Activated naive CD4-positive, alpha-beta T cell treated with anti-CD3 and anti-CD28 coated beads for 36 hours (primary cell): ENCODE measurements at regions of chr2 and their contacts with region 1.

Region 1: DNA sequence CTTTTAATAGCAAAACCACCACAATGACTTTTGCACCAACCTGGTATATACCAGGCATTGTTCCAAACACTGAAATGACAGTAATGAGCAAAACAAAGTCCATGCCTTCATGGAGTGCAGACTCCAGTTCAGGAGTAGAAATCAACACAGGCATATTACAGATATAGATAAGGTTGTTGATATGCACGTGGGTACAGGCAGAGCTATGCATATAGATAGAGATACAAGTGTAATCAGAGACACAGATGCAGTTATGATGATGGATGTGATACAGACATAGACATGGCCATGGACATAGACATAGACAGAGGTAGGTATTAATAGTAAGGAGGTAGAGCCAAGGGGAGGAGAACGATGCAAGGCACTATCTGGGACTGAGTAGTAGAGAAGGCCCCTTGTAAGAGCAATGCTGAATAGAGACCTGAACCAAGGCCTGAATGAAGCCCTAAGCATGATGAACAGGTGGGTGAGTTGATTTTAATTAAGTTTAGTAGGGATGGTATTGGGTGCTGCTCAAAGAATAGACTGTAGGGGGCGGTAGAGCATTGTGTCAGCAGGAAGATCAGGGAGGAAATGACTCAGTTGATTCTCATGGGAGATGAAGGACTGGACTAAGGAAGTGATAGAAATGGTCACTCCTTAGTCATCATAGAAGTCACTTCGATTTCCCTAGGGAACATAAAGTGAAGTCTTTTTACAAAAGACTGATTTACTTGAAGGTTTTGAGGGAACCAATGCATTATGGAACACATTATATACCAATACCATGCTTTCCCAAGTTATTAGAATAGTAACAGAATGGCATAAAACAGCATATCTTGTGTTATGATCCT is 39.4 kb downstream of the CMPK2 start:
- DNase-seq: peak; percentile 81
- H3K4me3 Mint-ChIP-seq: no peak overlapping the region
- H3K27ac Mint-ChIP-seq: no peak overlapping the region
- H3K4me1 Mint-ChIP-seq: peaks cover 2% of the 10 kb centered on the region
- H3K27me3 Mint-ChIP-seq: no peaks in the 10 kb centered on the region

Region 2: GRCh38 chr2:6865346-6866274 is 39.3 kb after region 1 on chr2 and contains the start of gene CMPK2:
- CTCF ChIA-PET with region 1: interaction called, 17 read pairs
- intact Hi-C with region 1: loop called (anchors 1 kb)
- DNase-seq: peak; percentile 82
- H3K4me3 Mint-ChIP-seq: peak within 1 kb of the TSS; percentile 89
- H3K27ac Mint-ChIP-seq: peak within 1 kb of the TSS; percentile 77
- H3K4me1 Mint-ChIP-seq: peaks cover 17% of the 10 kb centered on the region
- H3K27me3 Mint-ChIP-seq: no peaks in the 10 kb centered on the region
- total RNA-seq, gene CMPK2: 7.2 to 7.7 TPM

Region 3: GRCh38 chr2:6877402-6878304 is 51.4 kb after region 1 on chr2 and contains the start of gene RSAD2:
- CTCF ChIA-PET with region 1: interaction called, 4 read pairs
- intact Hi-C with region 1: loop called (anchors 1 kb)
- DNase-seq: peak; percentile 45
- H3K4me3 Mint-ChIP-seq: peak within 1 kb of the TSS; percentile 68
- H3K27ac Mint-ChIP-seq: no peak within 1 kb of the TSS
- H3K4me1 Mint-ChIP-seq: peaks cover 66% of the 10 kb centered on the region
- H3K27me3 Mint-ChIP-seq: no peaks in the 10 kb centered on the region
- total RNA-seq, gene RSAD2: 9.1 to 9.9 TPM

Region 4: DNA sequence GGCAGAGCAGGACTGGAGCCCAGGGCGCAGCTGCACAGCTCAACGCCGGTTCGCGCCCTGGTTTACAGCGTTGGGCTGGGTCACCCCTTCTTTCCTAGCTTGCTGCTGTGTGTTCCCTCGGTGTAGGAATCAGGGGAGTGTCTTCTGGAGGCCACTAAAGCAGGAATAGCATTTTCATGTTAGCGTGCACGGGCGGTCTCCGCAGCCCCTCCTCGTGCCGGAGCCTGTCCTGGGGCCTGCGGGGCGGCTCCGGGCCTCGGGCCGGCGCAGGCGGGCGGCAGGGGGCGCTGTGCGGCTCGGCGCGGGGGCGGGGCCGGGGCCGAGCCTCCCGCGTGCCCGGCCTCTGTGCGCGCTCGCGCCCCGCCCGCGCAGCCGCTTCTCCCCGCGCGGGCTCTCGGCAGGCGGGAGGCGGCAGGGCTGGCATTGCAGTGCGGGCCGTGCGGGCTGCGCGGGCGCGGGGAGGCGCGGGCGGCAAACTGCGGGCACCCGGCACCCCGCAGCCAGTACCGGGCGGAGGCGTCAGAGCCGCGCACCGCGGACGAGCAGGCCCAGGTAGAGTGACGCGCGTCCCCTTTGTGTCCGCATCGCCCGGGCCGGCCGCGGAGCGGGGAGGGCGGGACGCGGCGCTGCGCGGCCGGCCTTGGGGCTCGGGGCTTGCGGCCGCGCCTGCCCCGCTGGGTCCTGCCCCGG is 90.9 kb after region 1 on chr2 and contains the start of gene RNF144A:
- CTCF ChIA-PET with region 1: interaction called, 6 read pairs
- intact Hi-C with region 1: loop called (anchors 2 kb)
- DNase-seq: peak; percentile 67
- H3K4me3 Mint-ChIP-seq: peak within 1 kb of the TSS; percentile 76
- H3K27ac Mint-ChIP-seq: peak within 1 kb of the TSS; percentile 85
- H3K4me1 Mint-ChIP-seq: peaks cover 75% of the 10 kb centered on the region
- H3K27me3 Mint-ChIP-seq: no peaks in the 10 kb centered on the region
- total RNA-seq, gene RNF144A: 49.0 to 50.6 TPM

Region 5: GRCh38 chr2:7083577-7084509 is 257.5 kb after region 1 on chr2:
- CTCF ChIA-PET with region 1: interaction called, 3 read pairs
- intact Hi-C with region 1: loop called (anchors 2 kb)
- DNase-seq: peak; percentile 19
- H3K4me3 Mint-ChIP-seq: no peak overlapping the region
- H3K27ac Mint-ChIP-seq: no peak overlapping the region
- H3K4me1 Mint-ChIP-seq: no peaks in the 10 kb centered on the region
- H3K27me3 Mint-ChIP-seq: no peaks in the 10 kb centered on the region

Region 6: DNA sequence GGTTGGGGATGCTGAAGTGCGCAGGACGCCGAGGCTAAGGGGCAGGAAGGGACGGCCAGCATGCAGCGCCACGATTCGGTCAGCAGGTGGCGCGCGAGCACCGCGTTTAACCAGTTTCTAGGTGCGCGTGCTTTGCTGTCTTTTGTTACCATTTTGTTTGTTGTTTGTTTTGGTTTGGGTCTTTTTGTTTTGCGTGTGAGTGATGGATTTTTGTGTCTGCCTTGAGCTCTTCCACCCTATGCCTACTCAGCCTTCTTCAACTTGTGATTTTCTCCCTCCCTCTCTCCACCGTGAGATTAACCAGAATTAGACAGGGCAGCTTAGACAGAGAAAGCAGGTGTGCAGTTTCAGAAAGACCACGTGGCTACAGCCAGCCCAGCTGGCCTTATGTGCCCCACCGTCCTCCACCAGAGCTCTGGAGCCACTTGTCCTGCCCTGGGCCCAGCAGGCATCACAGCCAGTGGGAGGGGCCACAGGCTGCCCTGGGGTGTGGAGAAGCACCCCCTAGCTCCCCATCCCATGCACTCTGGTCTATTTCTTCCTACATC is 271.1 kb after region 1 on chr2:
- CTCF ChIA-PET with region 1: no interaction called
- intact Hi-C with region 1: loop called (anchors 1 kb)
- DNase-seq: peak; percentile 84
- H3K4me3 Mint-ChIP-seq: peak overlapping the region; percentile 58
- H3K27ac Mint-ChIP-seq: no peak overlapping the region
- H3K4me1 Mint-ChIP-seq: peaks cover 7% of the 10 kb centered on the region
- H3K27me3 Mint-ChIP-seq: no peaks in the 10 kb centered on the region

Region 7: GRCh38 chr2:7203055-7203467 is 376.8 kb after region 1 on chr2:
- CTCF ChIA-PET with region 1: interaction called, 3 read pairs
- intact Hi-C with region 1: loop called (anchors 5 kb)
- DNase-seq: peak; percentile 77
- H3K4me3 Mint-ChIP-seq: no peak overlapping the region
- H3K27ac Mint-ChIP-seq: no peak overlapping the region
- H3K4me1 Mint-ChIP-seq: no peaks in the 10 kb centered on the region
- H3K27me3 Mint-ChIP-seq: no peaks in the 10 kb centered on the region